Natural killer cell (primary cell): ENCODE measurements at regions of chr12 and their contacts with region 1.

Region 1: DNA sequence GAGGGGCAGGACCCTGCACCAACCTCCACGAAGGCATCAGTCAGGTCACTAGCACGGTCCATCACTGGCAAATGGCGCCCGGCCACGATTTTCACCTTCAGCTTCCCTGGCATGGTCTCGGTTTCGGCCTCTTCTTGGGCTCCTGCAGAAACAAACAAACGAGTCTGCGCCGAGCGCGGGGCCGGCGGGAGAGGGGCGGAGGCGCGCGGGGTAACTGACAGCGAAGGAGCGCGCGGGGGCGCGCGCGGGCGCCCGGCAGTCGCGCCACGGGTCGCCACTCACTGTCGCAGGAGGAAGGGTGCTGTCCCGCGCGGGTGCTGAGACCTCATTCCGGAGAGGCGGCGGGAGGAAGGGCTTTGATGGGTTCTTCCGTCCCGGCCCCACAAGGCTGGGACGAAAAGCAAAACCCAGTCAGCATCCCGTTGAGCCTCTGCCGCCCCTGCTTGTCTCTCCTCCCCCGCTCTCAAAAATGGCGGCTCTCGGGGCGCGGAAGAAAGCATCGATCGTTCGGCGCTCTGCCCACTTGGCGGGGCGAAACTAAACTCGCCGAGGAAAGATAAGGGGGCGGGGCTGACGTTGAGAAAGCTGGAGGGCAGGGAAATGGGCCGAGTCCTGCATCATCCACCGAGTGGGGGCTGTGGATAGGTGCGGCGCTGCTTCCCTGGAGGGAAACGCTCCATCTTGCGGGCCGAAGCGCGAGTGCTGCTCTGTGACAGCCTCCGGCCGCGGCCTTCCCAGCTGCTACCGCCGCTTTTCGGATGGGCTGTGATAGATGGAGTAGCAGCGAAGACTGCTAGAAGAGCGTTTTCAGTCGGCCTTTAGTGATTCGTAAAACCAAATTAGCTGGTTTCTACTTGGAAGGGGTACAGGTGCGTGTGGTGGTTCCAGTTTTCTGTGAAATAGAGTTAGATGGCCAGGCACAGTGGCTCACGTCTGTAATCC is at the start of gene C2CD5:
- DNase-seq: peak; percentile 89 to 98
- ATAC-seq: peak; percentile 90 to 97 (median 90)
- H3K4me3 ChIP-seq: peak within 1 kb of the TSS; percentile 97
- H3K4me3 Mint-ChIP-seq: peak within 1 kb of the TSS; percentile 96
- H3K27ac ChIP-seq: peak within 1 kb of the TSS; percentile 92
- H3K27ac Mint-ChIP-seq: peak within 1 kb of the TSS; percentile 91 to 92
- H3K4me1 ChIP-seq: peaks cover 18% of the 10 kb centered on the region
- H3K4me1 Mint-ChIP-seq: peaks cover 33 to 34% of the 10 kb centered on the region in 2 donors
- H3K27me3 ChIP-seq: no peaks in the 10 kb centered on the region
- H3K27me3 Mint-ChIP-seq: peaks cover 3 to 17% of the 10 kb centered on the region in 2 donors
- CTCF ChIP-seq: peak; percentile 25
- total RNA-seq, gene C2CD5: 31.2 to 42.8 (median 41.9) TPM

Region 2: DNA sequence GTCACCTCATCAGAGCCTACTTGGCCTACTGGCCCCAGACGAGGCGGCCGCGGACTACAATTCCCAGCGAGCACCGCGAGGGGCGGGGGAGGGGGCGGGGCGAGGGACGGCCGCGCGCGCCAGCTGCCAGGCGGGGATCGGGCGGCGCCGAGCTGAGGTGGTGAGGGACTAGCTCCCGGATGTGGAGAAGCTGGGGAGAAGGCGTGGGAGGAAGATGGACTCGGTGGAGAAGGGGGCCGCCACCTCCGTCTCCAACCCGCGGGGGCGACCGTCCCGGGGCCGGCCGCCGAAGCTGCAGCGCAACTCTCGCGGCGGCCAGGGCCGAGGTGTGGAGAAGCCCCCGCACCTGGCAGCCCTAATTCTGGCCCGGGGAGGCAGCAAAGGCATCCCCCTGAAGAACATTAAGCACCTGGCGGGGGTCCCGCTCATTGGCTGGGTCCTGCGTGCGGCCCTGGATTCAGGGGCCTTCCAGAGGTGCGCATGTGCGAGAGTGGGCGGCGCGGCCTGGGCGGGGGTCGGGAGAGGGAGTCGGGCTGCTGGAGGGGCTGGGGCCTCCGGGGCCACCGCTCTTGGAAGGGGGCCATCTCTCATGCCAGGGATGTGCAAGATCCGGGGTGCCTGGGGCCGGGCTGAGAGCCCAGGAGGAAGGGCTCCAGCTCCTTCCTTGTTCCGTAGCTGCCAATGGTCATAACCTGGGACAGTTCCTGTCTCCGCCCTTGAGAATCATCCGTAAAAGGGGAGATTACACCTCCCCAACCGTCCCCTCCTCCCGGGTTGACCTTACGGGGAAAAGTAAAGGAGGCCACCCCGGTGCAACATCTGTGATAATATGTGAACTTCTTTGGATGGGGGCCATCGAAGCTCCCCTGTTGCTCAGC is 498.0 kb before region 1 on chr12 and contains the start of gene CMAS:
- intact Hi-C with region 1: loop called (anchors 1 kb)
- DNase-seq: peak; percentile 48 to 86
- ATAC-seq: peak; percentile 89 to 94 (median 90)
- H3K4me3 ChIP-seq: peak within 1 kb of the TSS; percentile 88
- H3K4me3 Mint-ChIP-seq: peak within 1 kb of the TSS; percentile 92
- H3K27ac ChIP-seq: peak within 1 kb of the TSS; percentile 28
- H3K27ac Mint-ChIP-seq: peak within 1 kb of the TSS; percentile 79 to 87
- H3K4me1 ChIP-seq: peaks cover 2% of the 10 kb centered on the region
- H3K4me1 Mint-ChIP-seq: peaks cover 24 to 35% of the 10 kb centered on the region in 2 donors
- H3K27me3 ChIP-seq: no peaks in the 10 kb centered on the region
- H3K27me3 Mint-ChIP-seq: peaks cover 1 to 2% of the 10 kb centered on the region in 2 donors
- CTCF ChIP-seq: no peak
- total RNA-seq, gene CMAS: 10.0 to 19.8 (median 13.7) TPM

Region 3: GRCh38 chr12:22624870-22625761 is 80.8 kb after region 1 on chr12 and contains the start of gene ETNK1:
- intact Hi-C with region 1: loop called (anchors 1 kb)
- DNase-seq: peak; percentile 90 to 92
- ATAC-seq: peak; percentile 93 to 98 (median 96)
- H3K4me3 ChIP-seq: peak within 1 kb of the TSS; percentile 70
- H3K4me3 Mint-ChIP-seq: peak within 1 kb of the TSS; percentile 97
- H3K27ac ChIP-seq: peak within 1 kb of the TSS; percentile 93
- H3K27ac Mint-ChIP-seq: peak within 1 kb of the TSS; percentile 94 to 95
- H3K4me1 ChIP-seq: peaks cover 14% of the 10 kb centered on the region
- H3K4me1 Mint-ChIP-seq: peaks cover 41 to 48% of the 10 kb centered on the region in 2 donors
- H3K27me3 ChIP-seq: no peaks in the 10 kb centered on the region
- H3K27me3 Mint-ChIP-seq: peaks cover 3 to 12% of the 10 kb centered on the region in 2 donors
- CTCF ChIP-seq: no peak
- total RNA-seq, gene ETNK1: 77.6 to 101 (median 85.2) TPM